Dendritic cell treated with granulocyte-macrophage colony-stimulating factor and Interleukin-4, amounts not matched to agents 40 ng/mL and 50 ng/mL, for 4 days (primary cell): ENCODE measurements at regions of chr3 and their contacts with region 1.

Region 1: GRCh38 chr3:51498876-51499738 is 708 bp downstream of the DCAF1 start:
- H3K4me3 Mint-ChIP-seq: peak overlapping the region; percentile 84
- H3K27ac Mint-ChIP-seq: peak overlapping the region; percentile 97
- H3K4me1 Mint-ChIP-seq: peaks cover 15% of the 10 kb centered on the region
- H3K27me3 Mint-ChIP-seq: no peaks in the 10 kb centered on the region

Region 2: DNA sequence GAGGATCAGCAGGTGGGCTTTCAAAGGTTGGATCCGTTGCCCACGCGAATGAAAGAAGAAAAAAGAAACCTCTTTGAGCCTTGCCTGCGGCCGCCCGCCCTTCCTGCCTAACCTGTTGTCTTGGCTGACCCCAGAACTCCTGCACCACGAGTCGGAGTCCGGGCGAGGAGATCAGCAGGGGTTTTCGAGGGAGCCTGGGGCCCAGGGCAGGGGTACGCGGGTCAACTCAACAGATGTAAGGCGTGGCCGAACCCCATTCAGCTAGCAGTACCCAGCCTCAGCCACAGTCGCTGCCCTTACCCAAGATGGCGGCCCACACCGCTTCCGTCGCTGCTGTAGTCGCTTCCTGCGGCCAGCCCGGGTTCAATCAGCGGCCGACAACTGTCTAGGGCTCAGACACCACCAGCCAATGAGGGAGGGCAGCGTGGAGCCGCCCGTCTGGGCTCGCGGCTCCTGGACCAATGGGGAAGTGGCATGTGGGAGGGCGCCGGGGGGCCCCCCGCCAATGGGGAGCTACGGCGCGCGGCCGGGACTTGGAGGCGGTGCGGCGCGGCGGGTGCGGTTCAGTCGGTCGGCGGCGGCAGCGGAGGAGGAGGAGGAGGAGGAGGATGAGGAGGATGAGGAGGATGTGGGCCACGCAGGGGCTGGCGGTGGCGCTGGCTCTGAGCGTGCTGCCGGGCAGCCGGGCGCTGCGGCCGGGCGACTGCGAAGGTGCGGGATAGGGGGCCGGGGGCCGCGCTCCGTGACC is 114.2 kb before region 1 on chr3 and contains the start of gene MANF:
- intact Hi-C with region 1: loop called (anchors 2 kb)
- H3K4me3 Mint-ChIP-seq: peak within 1 kb of the TSS; percentile 93
- H3K27ac Mint-ChIP-seq: peak within 1 kb of the TSS; percentile 99
- H3K4me1 Mint-ChIP-seq: peaks cover 60% of the 10 kb centered on the region
- H3K27me3 Mint-ChIP-seq: no peaks in the 10 kb centered on the region

Region 3: DNA sequence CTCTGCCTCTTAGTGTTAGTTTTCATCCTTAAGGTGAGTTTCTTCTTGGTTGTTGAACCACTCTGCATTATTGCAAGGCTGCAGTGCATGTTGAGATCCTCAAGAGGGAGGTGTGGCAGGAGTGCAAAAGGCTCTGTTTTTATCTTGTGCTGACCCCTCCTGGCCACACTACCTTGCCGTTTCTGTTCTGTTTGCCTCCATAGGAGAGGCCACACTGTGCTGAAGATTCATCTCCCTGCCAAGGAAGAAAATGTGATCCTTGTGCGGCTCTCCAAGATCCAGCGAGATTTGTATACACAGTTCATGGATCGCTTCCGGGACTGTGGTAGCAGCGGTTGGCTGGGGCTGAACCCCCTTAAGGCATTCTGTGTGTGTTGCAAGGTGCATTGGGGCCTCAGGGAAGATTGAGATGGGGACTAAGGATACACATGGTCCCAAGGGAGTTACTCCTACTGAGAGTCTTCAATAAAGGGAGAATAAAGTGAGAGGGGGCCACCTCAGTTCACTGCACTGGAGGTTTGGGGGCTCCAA is 138.9 kb after region 1 on chr3:
- intact Hi-C with region 1: loop called (anchors 1 kb)
- H3K4me3 Mint-ChIP-seq: no peak overlapping the region
- H3K27ac Mint-ChIP-seq: no peak overlapping the region
- H3K4me1 Mint-ChIP-seq: no peaks in the 10 kb centered on the region
- H3K27me3 Mint-ChIP-seq: no peaks in the 10 kb centered on the region

Region 4: DNA sequence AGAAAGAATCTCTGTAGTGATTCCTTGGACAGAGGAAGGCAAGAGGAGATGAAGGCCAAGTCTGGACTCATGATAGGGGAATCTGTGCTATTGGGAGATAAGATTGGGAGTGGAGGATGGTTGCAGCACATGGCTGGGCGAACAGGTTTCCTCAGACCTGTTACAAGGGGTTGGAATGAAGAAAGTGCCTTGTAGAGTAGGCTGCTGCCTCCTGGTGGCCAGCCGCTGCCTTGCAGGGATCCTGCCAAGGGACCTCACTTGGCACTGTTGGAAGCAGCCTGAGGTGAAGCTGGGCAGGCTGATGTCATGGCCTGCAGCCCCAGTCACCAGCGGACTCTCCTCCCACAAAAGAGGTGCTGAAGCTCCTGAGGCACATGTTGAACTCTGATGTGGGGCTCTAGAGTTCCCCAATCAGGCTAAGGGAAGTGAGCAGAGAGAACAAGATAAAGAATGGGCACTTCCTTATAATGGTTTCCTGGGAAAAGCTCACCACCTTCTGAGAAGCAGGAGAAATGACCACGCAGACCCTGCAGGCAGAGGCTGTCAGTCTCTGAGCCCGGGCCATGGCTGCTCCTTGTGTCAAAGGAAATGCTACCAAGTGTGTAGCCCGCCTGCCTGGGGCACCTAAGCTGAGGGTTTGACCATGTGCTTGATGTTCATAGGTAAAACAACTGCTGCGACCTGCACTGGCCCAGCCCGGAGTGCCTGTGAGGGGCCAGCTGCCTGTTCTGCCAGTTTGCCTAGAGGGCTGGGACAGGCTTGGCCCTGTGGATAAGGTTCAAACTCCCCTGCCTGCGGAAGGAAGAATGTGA is 170.3 kb after region 1 on chr3:
- intact Hi-C with region 1: loop called (anchors 1 kb)
- H3K4me3 Mint-ChIP-seq: peak overlapping the region; percentile 66
- H3K27ac Mint-ChIP-seq: peak overlapping the region; percentile 89
- H3K4me1 Mint-ChIP-seq: peaks cover 78% of the 10 kb centered on the region
- H3K27me3 Mint-ChIP-seq: no peaks in the 10 kb centered on the region

Region 5: DNA sequence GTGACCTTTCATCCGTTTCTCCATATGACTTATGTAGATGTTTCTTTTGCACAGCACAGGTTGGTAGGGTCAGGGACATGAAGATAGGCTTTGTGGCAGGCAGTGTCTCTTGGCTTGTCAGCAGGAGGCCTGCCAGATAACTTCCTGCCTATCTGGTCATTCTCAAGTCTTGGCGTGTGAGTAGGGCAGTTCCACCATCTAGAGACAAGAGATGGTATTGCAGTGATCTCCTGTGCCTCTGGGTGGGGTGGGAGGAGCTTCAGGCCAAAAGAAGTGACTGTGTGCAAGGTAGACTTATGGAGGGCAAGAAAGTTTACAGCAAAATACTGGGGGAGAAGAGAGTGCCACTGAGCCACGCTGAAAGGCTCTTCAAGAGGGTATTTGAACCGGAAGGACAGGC is 183.0 kb after region 1 on chr3:
- intact Hi-C with region 1: loop called (anchors 1 kb)
- H3K4me3 Mint-ChIP-seq: no peak overlapping the region
- H3K27ac Mint-ChIP-seq: peak overlapping the region; percentile 16
- H3K4me1 Mint-ChIP-seq: peaks cover 93% of the 10 kb centered on the region
- H3K27me3 Mint-ChIP-seq: no peaks in the 10 kb centered on the region

Region 6: DNA sequence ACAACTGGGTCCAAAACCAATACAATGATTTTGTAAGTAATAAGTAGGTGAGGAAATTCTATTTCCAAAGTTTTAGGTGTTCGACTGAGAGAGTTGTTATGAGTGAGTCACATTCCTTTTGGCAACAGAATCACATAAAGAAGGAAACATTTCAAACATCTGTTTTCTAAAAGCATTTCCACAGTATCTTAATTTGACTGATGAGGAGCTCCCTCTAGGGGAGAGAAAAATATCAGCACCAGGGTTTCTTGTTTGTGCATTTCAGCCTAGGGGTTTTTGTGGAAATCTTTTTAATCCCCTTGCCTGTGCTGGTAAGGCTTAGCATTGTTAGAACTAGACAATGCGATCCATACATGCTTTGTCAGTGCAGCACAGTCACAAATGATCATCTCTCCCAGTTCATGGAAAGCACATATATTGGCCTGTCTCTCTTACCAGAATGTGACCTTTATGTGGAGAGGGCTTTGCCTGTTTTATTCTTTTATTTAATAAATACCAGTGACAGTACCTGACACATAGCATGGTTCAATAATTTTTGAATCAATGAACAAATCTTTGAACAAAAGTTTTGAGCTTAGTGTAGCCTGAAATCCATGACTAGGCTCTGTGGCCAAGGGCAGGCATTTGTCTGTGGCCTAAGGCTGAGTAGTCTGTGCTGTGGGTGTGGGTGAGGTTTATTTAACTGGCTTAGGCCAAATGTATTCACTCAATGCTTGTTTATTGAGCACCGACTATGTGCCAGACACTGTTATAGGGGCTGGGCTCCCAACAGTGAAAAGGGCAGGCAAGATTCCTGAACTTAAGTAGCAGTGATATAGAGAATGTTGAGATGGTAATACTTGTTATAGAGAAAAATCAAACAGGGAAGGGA is 301.0 kb after region 1 on chr3:
- intact Hi-C with region 1: loop called (anchors 5 kb)
- H3K4me3 Mint-ChIP-seq: no peak overlapping the region
- H3K27ac Mint-ChIP-seq: no peak overlapping the region
- H3K4me1 Mint-ChIP-seq: peaks cover 8% of the 10 kb centered on the region
- H3K27me3 Mint-ChIP-seq: peaks cover 12% of the 10 kb centered on the region

Region 7: GRCh38 chr3:51928438-51928837 is 429.3 kb after region 1 on chr3:
- intact Hi-C with region 1: no loop called
- H3K4me3 Mint-ChIP-seq: no peak overlapping the region
- H3K27ac Mint-ChIP-seq: no peak overlapping the region
- H3K4me1 Mint-ChIP-seq: peaks cover 6% of the 10 kb centered on the region
- H3K27me3 Mint-ChIP-seq: peaks cover 7% of the 10 kb centered on the region